ENCODE measurements at regions of chr3 and their contacts with region 1.

Region 1: GRCh38 chr3:134212906-134213665 is 37.6 kb downstream of the RYK start:
- DNase-seq: peak; percentile 94
- H3K4me3 Mint-ChIP-seq: no peak overlapping the region
- H3K27ac Mint-ChIP-seq: peak overlapping the region; percentile 21
- H3K4me1 Mint-ChIP-seq: peaks cover 9% of the 10 kb centered on the region
- H3K27me3 Mint-ChIP-seq: no peaks in the 10 kb centered on the region

Region 2: DNA sequence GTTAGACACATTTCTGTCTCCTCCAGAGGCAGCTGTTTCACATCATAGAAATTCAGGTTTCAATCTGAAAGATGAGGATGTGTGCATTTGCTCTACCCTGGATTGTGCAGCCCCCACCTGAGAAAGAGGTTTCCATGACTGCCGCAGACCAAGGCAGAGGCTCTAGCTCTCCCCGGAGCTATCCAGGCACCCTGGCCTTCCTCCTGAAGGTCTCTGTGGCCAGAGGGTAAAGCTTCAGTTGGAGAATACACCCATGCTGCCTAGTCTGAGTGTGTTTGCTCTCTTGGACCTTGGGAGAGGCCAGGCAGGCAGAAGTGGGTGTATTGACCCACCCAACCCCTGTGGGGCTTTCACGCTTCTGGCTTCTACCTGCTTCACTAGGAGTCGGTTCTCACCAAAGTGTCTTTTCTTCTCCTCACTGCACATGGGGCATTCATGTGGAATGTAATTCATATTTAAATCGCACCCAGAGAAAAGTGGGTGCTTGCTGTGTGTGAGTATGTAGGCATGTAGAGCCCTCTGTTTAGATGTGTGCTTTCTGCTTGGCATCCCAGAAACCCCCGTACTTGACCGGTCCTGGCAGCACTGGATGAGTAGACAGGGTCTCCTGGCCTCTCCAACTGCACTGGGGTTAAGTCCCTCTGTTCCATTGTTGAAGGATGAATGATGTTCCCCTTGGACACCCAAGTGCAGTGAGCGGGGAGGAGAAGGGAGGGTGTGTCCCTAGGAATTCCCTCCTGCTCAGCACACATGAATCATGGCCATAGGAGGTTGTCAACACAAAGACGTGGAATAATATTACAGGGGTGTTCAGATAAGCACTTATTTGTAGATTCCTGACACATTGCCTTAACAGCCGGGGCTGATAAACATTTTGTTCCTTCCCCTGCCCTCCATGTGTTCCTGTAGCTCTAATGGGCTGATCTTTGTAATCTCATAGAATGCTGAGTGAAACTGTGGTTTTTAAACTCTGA is 297.1 kb before region 1 on chr3:
- intact Hi-C with region 1: no loop called
- DNase-seq: no peak
- H3K4me3 Mint-ChIP-seq: no peak overlapping the region
- H3K27ac Mint-ChIP-seq: no peak overlapping the region
- H3K4me1 Mint-ChIP-seq: no peaks in the 10 kb centered on the region
- H3K27me3 Mint-ChIP-seq: peaks cover 19% of the 10 kb centered on the region

Region 3: DNA sequence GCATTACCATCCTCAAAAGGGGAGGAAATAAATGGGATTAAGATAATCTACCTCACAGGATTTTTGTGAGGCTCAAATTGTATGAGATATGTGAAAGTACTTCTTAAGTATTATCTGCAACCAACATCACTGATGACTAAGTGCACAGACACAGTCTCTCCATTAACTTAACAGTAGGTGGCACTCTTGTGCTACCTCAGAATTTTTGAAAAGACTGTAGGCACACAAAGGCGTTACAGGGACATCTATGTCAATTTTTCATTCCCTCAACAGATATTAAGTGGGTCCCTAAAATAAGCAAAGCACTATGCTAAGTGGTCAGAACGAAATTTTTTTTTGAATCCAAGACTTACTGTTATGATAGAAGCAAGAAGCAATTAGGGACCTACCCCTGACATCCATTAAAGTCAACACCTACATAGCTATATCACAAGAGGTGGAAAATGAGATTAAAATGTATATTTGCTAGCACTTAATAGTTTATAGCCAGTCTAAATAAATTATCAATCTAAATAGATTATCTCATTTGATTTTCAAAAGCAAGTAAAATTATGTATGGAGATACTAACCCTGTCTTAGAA is 15.3 kb before region 1 on chr3:
- intact Hi-C with region 1: loop called (anchors 2 kb)
- DNase-seq: peak; percentile 77
- H3K4me3 Mint-ChIP-seq: no peak overlapping the region
- H3K27ac Mint-ChIP-seq: no peak overlapping the region
- H3K4me1 Mint-ChIP-seq: no peaks in the 10 kb centered on the region
- H3K27me3 Mint-ChIP-seq: no peaks in the 10 kb centered on the region

Region 4: GRCh38 chr3:134228035-134228434 is 14.9 kb after region 1 on chr3:
- intact Hi-C with region 1: loop called (anchors 1 kb)
- DNase-seq: no peak
- H3K4me3 Mint-ChIP-seq: no peak overlapping the region
- H3K27ac Mint-ChIP-seq: no peak overlapping the region
- H3K4me1 Mint-ChIP-seq: peaks cover 12% of the 10 kb centered on the region
- H3K27me3 Mint-ChIP-seq: peaks cover 21% of the 10 kb centered on the region

Region 5: DNA sequence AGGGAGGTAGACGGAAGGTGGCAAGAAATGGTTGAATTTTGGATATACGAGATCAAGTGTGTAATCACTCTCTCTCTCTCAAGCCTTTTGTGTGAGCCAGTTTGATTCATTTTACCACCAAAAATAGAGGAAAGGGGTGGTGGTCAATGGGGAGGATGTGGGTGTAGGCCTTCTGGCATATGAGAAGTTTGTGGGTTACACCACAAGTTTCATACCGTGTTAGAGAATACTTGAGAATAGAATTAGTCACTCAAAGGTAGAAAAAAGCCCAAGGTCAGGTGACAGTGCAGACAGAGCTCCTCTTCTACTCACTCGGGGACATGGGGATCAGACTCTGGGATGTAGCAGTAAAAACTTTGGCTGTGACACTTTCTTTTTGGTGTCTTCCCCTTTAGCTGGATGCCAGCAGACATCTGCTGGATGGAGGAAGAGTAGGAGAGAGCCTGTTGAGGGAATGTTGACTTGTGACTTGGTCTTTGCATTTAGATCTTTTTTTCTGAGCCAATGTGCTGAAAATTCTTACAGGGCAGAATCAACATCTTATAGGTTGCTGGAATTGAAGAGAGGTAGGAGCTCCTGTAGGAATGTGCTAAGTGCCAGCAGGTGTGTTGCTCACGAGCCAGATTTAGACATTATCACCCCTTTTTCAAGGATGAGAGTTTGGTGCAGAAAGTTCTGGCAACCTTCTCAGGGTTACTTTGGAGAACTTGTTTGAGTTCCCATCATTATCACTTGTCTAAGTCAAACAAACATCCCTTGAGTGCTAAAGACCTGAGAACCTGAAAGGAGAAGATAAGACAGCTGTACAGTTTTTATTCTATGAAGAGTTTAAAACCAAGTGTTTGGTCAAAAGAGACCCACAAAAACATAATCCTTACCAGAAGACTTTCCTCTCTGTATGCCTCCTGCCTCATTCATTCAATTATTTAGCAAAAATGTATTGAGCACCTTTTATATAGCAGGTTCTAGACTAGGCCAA is 81.5 kb after region 1 on chr3:
- intact Hi-C with region 1: loop called (anchors 1 kb)
- DNase-seq: peak; percentile 89
- H3K4me3 Mint-ChIP-seq: no peak overlapping the region
- H3K27ac Mint-ChIP-seq: no peak overlapping the region
- H3K4me1 Mint-ChIP-seq: peaks cover 2% of the 10 kb centered on the region
- H3K27me3 Mint-ChIP-seq: peaks cover 43% of the 10 kb centered on the region

Region 6: DNA sequence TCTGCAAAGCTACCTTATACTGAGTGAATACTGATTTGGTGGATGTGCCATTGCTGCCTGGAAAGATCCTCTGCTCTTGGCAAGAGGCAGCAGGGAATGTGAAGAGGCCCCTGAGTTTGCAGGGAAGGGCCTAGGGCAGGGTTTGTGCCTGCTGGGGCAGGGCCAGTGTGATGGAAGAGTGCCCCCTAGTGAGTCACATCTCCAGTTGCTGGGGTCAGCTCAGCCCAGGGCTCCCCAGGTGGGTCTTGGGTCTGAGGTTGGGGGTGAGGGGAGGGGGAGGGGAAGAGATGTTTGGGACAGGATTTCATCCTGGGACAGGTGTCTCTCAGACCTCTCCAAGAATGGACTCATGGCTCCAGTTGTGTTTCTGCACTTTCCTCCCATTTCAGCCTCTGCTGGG is 165.3 kb after region 1 on chr3:
- intact Hi-C with region 1: loop called (anchors 1 kb)
- DNase-seq: peak; percentile 66
- H3K4me3 Mint-ChIP-seq: no peak overlapping the region
- H3K27ac Mint-ChIP-seq: no peak overlapping the region
- H3K4me1 Mint-ChIP-seq: peaks cover 8% of the 10 kb centered on the region
- H3K27me3 Mint-ChIP-seq: peaks cover 45% of the 10 kb centered on the region

Region 7: DNA sequence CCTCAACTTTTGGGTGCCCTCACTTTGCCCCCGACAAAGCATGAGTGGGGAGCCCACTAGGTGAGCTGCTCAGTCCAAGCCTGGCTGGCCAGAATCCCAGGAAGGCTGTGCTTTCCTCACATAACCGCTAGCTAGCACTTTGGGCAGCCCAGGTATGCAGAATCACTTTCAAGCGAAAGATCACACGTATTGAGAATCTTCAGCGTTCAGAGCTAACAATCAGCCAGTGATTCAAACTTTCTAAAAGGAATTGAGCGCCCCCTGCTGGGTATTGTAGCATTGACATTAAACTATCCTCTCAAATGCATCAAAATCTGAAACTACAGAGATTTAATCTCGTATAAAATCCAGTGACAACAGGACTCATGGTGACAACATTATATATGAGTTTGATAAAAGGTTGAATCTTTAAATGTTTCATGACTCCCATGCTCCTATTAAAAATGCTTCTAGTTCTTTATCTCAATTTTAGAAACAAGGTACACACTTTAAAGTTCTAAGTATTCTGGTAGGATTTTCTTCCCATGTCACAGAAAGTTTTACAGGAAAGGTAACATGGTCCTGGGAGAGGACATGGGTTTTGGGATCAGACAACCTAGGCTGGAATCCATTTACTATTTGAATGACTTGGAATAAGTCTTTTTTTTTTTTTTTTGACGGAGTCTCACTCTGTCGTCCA is 260.9 kb after region 1 on chr3:
- intact Hi-C with region 1: loop called (anchors 1 kb)
- DNase-seq: peak; percentile 93
- H3K4me3 Mint-ChIP-seq: no peak overlapping the region
- H3K27ac Mint-ChIP-seq: no peak overlapping the region
- H3K4me1 Mint-ChIP-seq: no peaks in the 10 kb centered on the region
- H3K27me3 Mint-ChIP-seq: no peaks in the 10 kb centered on the region

Measured in activated CD4-positive, alpha-beta T cell treated with anti-CD3 and anti-CD28 coated beads, Interleukin-2, amount 10 ng/mL, durations not matched to agents 24 days and 14 days (primary cell).